Calu3 (cell line): ENCODE measurements at regions of chr10 and their contacts with region 1.

Region 1: DNA sequence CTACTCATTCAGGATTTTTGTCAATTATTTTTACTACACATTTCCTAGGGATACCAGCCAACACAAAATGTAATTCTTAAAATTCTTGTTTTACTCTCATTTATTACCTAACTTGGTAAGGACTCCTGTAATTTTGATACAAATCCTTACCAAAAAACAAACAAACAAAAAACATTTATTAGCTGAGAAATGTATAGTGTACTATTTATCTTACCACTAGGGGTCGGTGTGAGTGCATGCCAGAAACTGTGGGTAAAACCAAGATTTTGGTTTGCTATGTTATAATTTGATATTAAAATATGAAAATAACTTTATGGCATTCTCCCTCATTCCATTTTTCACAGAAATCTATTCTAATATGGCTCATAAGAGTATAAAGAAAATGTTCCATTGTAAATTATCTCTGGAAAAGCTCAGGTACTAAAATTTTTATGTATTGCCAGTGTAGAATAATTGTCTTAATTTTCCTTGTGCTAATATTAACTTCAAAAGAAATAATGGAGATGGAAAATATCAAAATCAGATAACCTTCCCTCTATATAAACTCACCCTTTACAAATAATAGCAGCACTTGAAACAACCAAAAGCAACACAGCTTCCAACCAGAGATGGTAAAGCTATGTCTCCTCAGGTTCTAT is 290.8 kb upstream of the PCDH15 start:
- DNase-seq: peak; percentile 11
- H3K4me3 Mint-ChIP-seq: no peak overlapping the region
- H3K27ac Mint-ChIP-seq: no peak overlapping the region
- H3K4me1 Mint-ChIP-seq: no peaks in the 10 kb centered on the region
- H3K27me3 Mint-ChIP-seq: no peaks in the 10 kb centered on the region
- CTCF ChIP-seq: peak; percentile 80

Region 2: GRCh38 chr10:54985732-54986131 is 106.1 kb before region 1 on chr10:
- CTCF ChIA-PET with region 1: no interaction called
- intact Hi-C with region 1: loop called (anchors 5 kb)
- DNase-seq: no peak
- H3K4me3 Mint-ChIP-seq: no peak overlapping the region
- H3K27ac Mint-ChIP-seq: no peak overlapping the region
- H3K4me1 Mint-ChIP-seq: no peaks in the 10 kb centered on the region
- H3K27me3 Mint-ChIP-seq: no peaks in the 10 kb centered on the region
- CTCF ChIP-seq: peak; percentile 41

Region 3: DNA sequence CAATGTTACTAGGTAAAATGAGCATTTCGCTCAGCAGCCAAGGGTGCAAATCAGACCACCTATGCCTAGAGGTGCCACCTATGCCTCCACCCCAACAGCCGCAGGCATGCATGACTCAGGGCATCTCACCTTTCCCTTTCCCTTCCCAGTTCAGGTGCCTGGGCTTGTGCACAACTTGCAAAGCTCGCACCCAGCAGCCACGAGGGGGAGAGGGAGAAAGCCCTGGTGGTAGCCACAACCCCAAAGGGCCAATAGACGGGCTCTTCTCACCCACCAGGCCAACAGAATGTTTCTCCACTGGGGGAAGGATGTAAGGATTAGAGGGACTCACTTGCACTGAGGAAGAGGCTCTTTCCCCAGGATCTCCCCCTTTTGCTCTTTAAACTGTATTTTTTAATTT is 171.5 kb after region 1 on chr10:
- CTCF ChIA-PET with region 1: interaction called, 6 read pairs
- intact Hi-C with region 1: loop called (anchors 1 kb)
- DNase-seq: no peak
- H3K4me3 Mint-ChIP-seq: no peak overlapping the region
- H3K27ac Mint-ChIP-seq: no peak overlapping the region
- H3K4me1 Mint-ChIP-seq: no peaks in the 10 kb centered on the region
- H3K27me3 Mint-ChIP-seq: no peaks in the 10 kb centered on the region
- CTCF ChIP-seq: no peak

Region 4: DNA sequence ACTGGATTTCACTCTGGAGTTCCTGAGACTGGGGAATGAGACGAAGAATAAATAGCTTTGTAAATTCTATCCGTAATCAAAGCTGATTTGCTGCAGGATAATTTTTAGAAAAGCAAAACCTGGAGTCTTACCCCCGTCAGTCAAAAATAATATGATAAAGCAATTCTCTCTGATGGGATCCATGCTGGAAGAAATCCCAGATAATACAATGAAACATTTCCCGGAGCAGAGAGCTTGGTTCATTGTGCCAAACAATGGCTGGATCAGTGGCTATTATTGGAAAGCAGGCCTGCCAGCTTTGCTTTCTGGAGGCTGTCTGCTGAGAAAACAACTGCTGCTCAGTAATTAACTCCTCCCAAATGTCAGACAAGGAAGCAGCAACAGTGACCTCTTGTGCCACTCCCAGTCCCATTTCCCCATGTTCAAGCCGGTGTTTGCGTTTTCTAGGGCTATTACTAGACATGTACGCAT is 318.6 kb after region 1 on chr10:
- CTCF ChIA-PET with region 1: no interaction called
- intact Hi-C with region 1: loop called (anchors 10 kb)
- DNase-seq: peak; percentile 34
- H3K4me3 Mint-ChIP-seq: no peak overlapping the region
- H3K27ac Mint-ChIP-seq: no peak overlapping the region
- H3K4me1 Mint-ChIP-seq: no peaks in the 10 kb centered on the region
- H3K27me3 Mint-ChIP-seq: no peaks in the 10 kb centered on the region
- CTCF ChIP-seq: no peak

Region 5: DNA sequence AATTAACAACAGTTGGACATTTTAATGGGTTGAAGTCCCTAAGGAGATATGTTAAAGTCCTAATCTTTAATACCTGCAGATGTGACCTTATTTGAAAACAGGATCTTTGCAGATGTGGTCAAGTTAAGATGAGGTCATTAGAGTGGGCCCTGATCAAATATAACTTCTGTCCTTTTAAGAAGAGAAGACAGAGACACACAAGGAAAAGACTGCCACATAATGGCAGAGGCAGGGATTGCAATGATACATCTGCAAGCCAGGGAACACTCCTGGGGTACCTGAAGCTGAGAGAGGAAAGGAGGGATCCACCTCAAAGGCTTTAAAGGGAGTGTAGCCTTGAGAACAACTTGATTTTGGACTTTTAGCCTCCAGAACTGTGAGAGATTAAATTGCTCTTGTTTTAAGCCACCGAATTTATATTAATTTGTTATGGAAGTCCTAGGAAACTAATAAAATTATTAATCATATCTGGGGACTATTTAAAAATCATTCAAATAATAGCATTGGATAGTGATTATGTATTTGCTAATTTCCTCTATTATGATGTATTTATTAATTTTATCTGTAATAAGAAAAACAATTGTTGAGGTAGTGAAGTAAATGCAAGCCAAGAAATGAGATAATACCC is 409.2 kb after region 1 on chr10:
- CTCF ChIA-PET with region 1: no interaction called
- intact Hi-C with region 1: loop called (anchors 2 kb)
- DNase-seq: peak; percentile 69
- H3K4me3 Mint-ChIP-seq: no peak overlapping the region
- H3K27ac Mint-ChIP-seq: no peak overlapping the region
- H3K4me1 Mint-ChIP-seq: no peaks in the 10 kb centered on the region
- H3K27me3 Mint-ChIP-seq: no peaks in the 10 kb centered on the region
- CTCF ChIP-seq: peak; percentile 56

Region 6: DNA sequence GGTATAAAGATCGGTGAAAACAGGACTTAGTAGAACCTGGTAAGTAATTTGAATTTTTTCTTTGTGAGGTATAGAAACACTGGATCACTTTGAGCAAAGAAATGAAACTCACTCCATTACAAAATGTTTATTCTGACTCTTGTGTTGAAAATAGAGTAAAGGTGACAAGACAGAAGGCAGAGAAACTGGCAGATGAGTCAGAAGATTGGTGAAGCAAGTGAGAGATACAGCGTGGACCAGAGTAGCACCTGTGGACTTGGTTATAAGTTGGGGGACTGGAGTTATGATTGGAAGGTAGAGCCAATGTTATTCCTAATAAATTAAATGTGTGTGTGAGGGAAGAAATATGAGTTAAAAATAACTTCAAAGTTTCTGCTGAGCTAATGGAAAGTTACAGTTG is 648.3 kb after region 1 on chr10:
- CTCF ChIA-PET with region 1: no interaction called
- intact Hi-C with region 1: loop called (anchors 2 kb)
- DNase-seq: no peak
- H3K4me3 Mint-ChIP-seq: no peak overlapping the region
- H3K27ac Mint-ChIP-seq: peak overlapping the region; percentile 18
- H3K4me1 Mint-ChIP-seq: peaks cover 23% of the 10 kb centered on the region
- H3K27me3 Mint-ChIP-seq: no peaks in the 10 kb centered on the region
- CTCF ChIP-seq: no peak